Heart left ventricle (tissue), 16 donors: ENCODE measurements at regions of chr20 and their contacts with region 1.

Region 1: DNA sequence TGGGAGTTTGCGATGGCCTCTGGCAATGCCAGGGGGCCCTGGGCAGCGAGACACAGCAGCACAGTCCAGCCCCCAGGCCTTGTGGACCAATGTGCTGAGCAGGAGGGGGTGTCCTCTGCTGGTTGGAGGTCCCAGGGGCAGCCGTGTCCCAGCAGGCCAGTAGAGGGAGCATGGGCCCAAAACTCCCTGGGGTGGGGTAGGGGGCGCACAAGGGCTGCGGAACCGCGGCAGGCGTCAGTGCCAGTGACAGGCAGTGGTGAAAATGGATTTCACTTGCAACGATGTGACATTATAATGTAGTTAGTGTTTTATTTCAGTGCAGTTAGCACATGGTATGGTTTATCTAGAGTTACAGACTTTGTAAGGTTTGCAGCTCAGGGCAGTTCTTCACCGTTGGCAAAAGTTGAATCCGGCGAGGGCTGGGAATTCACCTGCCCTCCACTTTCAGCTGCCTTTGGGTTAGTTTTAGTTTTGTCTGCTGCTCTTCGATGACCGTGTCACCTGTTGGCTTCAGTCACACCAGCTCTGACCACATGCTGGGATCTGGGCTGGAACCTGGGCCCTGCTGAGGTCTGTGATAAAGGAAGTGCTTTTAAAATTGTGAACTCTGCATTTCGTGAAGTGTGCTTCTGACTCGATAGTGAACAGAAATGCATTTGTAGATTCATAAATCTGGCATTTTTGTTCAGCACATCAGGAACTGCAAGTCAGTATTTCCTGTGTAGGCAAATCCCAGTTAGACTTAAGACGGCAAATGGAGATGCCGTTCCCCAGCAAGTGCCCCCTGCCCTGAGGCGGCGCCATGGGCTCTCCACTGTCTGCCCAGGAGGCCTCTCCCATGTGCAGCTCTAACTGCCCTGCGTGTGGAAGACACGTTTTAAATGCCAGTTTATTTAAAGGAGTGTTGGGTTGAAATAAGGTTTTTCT is 46.8 kb downstream of the PYGB start:
- DNase-seq: peak in 3 of 5 donors; percentile 56 to 65 (median 64)
- ATAC-seq: peak; percentile 11 to 46 (median 25)
- H3K4me3 ChIP-seq: no peak overlapping the region
- H3K27ac ChIP-seq: peak overlapping the region; percentile 11 to 85 (median 76)
- H3K4me1 ChIP-seq: peaks cover 9 to 76% (median 37%) of the 10 kb centered on the region in 12 donors
- H3K27me3 ChIP-seq: no peaks in the 10 kb centered on the region
- CTCF ChIP-seq: peak; percentile 41 to 78 (median 61)
- POLR2A ChIP-seq: no peak

Region 2: GRCh38 chr20:25136643-25137559 is 157.8 kb before region 1 on chr20:
- intact Hi-C with region 1: no loop called
- DNase-seq: peak; percentile 71 to 87 (median 78)
- ATAC-seq: peak; percentile 92 to 98 (median 98)
- H3K4me3 ChIP-seq: no peak overlapping the region
- H3K27ac ChIP-seq: peak overlapping the region in 1 of 12 donors; percentile 4
- H3K4me1 ChIP-seq: peaks cover 0 to 13% (median 2%) of the 10 kb centered on the region in 12 donors
- H3K27me3 ChIP-seq: peaks cover 0 to 11% (median 0%) of the 10 kb centered on the region in 9 donors
- CTCF ChIP-seq: no peak
- POLR2A ChIP-seq: no peak

Region 3: DNA sequence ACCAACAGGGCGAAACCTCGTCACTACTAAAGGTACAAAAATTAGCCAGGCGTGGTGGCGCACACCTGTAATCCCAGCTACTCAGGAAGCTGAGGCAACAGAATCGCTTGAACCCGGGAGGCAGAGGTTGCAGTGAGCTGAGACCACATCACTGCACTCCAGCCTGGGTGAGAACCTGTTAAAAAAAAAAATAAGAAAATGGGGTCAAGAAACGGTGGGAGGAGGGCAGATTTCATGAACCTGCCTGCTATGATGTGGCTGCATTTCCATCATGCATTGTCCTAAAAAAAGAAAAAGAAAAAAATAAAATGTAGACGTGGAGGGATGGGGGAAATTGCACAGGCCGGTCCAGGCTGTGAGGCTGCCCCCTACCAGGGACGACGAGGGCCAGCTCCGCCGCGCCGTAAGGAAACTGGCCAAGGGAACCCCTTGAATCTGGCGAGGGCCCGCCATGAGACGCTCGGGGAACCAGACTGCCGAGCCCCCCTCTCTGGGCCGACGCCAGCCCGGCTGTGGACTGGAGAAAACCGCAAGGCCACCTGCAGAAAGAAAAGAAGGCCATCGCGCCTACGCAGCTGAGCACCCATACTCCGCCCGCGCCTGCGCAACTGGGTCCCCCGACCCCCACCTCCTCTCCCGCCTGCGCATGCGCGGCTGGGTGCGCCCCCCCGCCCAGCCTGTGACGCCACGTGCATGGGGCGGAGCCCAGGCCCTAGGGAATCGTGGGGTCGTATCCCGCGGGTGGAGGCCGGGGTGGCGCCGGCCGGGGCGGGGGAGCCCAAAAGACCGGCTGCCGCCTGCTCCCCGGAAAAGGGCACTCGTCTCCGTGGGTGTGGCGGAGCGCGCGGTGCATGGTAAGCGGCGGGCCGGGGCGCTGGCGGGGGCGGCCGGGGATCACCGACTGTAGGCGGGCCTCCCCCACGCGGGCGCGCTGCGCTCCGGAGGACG is 99.4 kb before region 1 on chr20 and contains the start of gene ENTPD6:
- intact Hi-C with region 1: loop called in 2 of 10 experiments (anchors 5 to 10 kb)
- DNase-seq: peak; percentile 94 to 97 (median 94)
- ATAC-seq: peak; percentile 71 to 88 (median 88)
- H3K4me3 ChIP-seq: peak within 1 kb of the TSS; percentile 63 to 99 (median 90)
- H3K27ac ChIP-seq: peak within 1 kb of the TSS; percentile 79 to 98 (median 93)
- H3K4me1 ChIP-seq: peaks cover 0 to 70% (median 42%) of the 10 kb centered on the region in 12 donors
- H3K27me3 ChIP-seq: no peaks in the 10 kb centered on the region
- CTCF ChIP-seq: peak in 6 of 12 donors; percentile 15 to 52 (median 40)
- POLR2A ChIP-seq: peak; percentile 52 to 85
- total RNA-seq, gene ENTPD6: 58.7 to 139 (median 86.7) TPM

Region 4: GRCh38 chr20:25247956-25248785 is 46.6 kb before region 1 on chr20 and contains the start of gene PYGB:
- intact Hi-C with region 1: loop called in 2 of 10 experiments (anchors 2 to 5 kb)
- DNase-seq: peak; percentile 79 to 89 (median 83)
- ATAC-seq: peak; percentile 33 to 91 (median 76)
- H3K4me3 ChIP-seq: peak within 1 kb of the TSS; percentile 72 to 99 (median 92)
- H3K27ac ChIP-seq: peak within 1 kb of the TSS; percentile 86 to 99 (median 96)
- H3K4me1 ChIP-seq: peaks cover 0 to 61% (median 34%) of the 10 kb centered on the region in 12 donors
- H3K27me3 ChIP-seq: no peaks in the 10 kb centered on the region
- CTCF ChIP-seq: no peak
- POLR2A ChIP-seq: peak; percentile 79 to 97
- total RNA-seq, gene PYGB: 172 to 450 (median 233) TPM

Region 5: GRCh38 chr20:25254986-25255680 is 39.6 kb before region 1 on chr20:
- intact Hi-C with region 1: loop called in 1 of 10 experiments (anchors 5 kb)
- DNase-seq: peak in 4 of 5 donors; percentile 72 to 87 (median 81)
- ATAC-seq: peak; percentile 90 to 92 (median 92)
- H3K4me3 ChIP-seq: peak overlapping the region in 2 of 12 donors; percentile 6 to 9
- H3K27ac ChIP-seq: peak overlapping the region; percentile 64 to 99 (median 96)
- H3K4me1 ChIP-seq: peaks cover 0 to 86% (median 51%) of the 10 kb centered on the region in 12 donors
- H3K27me3 ChIP-seq: no peaks in the 10 kb centered on the region
- CTCF ChIP-seq: peak in 5 of 12 donors; percentile 6 to 24 (median 11)
- POLR2A ChIP-seq: peak in 1 of 2 donors; percentile 8

Region 6: DNA sequence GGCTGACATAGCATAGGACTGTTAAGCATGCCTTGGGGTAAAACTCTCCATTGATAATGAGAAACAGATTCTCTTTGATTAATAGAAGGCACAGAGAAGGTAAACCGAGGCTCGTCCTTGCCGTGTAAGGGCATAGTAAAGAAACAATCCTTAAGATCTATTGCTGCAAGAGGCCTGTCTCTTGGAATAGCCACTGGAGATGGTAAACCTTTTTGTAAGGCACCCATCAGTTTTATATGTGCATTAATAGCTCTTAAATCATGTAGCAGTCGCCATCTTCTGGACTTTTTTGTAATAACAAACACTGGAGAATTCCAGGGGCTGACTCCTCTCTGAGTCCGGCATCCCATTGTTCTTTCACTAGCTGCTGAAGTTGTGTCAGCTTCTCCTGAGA is 104.3 kb after region 1 on chr20:
- intact Hi-C with region 1: loop called in 7 of 10 experiments (anchors 2 to 10 kb)
- DNase-seq: peak in 1 of 5 donors; percentile 29
- ATAC-seq: peak in 3 of 4 donors; percentile 84 to 88 (median 86)
- H3K4me3 ChIP-seq: no peak overlapping the region
- H3K27ac ChIP-seq: no peak overlapping the region
- H3K4me1 ChIP-seq: peaks cover 0 to 8% (median 0%) of the 10 kb centered on the region in 12 donors
- H3K27me3 ChIP-seq: no peaks in the 10 kb centered on the region
- CTCF ChIP-seq: peak; percentile 45 to 75 (median 63)
- POLR2A ChIP-seq: no peak